Mammary epithelial cell (primary cell): ENCODE measurements at regions of chr19 and their contacts with region 1.

Region 1: DNA sequence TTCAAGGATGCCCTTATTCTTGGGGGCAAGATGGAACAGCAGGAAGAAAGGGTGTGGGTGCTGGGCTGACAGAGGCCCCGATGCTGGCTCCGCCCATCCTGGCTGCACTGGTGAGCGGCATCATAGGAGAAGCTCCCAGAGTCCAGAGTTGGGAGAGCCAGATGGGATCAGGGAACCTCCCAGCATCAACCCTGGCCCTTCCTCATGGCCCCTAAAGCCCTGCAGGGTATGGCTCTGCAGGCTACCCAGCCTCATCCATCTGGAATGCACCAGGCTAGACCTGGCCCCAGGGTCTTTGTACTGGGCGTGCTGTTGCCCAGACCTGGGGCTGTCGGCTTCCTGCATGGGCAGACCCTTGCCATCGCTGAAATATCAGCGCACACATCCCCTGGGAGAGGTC is 7.9 kb upstream of the ELL start:
- DNase-seq: no peak
- H3K4me3 ChIP-seq: no peak overlapping the region
- H3K27ac ChIP-seq: no peak overlapping the region
- H3K4me1 ChIP-seq: peaks cover 14% of the 10 kb centered on the region
- H3K27me3 ChIP-seq: no peaks in the 10 kb centered on the region
- CTCF ChIP-seq: no peak

Region 2: GRCh38 chr19:18469069-18469846 is 60.5 kb before region 1 on chr19:
- CTCF ChIA-PET with region 1: no interaction called
- dilution Hi-C with region 1: loop called (anchors 5 kb)
- in situ Hi-C with region 1: no loop called
- intact Hi-C with region 1: loop called (anchors 5 kb)
- DNase-seq: no peak
- H3K4me3 ChIP-seq: no peak overlapping the region
- H3K27ac ChIP-seq: no peak overlapping the region
- H3K4me1 ChIP-seq: peaks cover 8% of the 10 kb centered on the region
- H3K27me3 ChIP-seq: no peaks in the 10 kb centered on the region
- CTCF ChIP-seq: peak; percentile 68 to 83

Region 3: DNA sequence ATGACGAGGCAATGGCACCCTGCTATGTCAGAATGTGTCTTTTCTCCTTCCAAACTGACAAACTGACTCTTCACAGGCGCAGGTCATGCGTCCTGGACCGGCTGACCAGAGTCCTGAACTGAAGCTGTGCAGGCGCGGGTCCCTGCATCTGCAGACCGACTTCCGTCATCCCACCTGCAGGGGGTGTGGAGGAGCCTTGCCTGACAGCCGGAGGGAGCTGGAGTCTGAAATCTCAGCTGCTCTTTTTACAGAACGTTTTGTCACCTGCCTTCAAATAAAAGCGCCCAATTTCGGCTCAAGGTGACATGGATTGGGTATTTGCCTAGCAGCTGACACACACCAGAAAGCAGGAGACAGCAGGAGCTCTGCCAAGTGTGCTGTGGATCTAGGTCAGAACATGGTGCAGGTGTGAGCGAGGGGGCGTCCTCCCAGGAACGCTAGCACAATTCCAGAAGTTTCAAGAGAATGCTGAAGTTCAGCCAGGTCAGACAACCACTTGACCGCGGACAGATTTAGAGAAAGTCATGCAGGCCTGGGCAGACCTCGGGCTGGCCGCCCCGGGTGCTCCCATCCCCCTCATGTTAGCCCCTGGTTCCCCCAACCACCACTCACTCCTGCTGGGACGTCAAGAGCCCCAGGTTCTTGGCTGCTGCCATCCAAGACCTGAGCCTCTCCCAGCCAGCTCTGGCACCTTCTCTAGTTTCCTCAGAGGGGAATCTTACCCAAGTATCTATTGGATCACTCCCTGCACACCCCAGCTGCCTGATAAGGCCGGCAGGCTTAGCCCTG is 40.8 kb before region 1 on chr19:
- CTCF ChIA-PET with region 1: no interaction called
- dilution Hi-C with region 1: loop called (anchors 5 kb)
- in situ Hi-C with region 1: no loop called
- intact Hi-C with region 1: no loop called
- DNase-seq: no peak
- H3K4me3 ChIP-seq: no peak overlapping the region
- H3K27ac ChIP-seq: no peak overlapping the region
- H3K4me1 ChIP-seq: peaks cover 29% of the 10 kb centered on the region
- H3K27me3 ChIP-seq: no peaks in the 10 kb centered on the region
- CTCF ChIP-seq: peak; percentile 26 to 49

Region 4: DNA sequence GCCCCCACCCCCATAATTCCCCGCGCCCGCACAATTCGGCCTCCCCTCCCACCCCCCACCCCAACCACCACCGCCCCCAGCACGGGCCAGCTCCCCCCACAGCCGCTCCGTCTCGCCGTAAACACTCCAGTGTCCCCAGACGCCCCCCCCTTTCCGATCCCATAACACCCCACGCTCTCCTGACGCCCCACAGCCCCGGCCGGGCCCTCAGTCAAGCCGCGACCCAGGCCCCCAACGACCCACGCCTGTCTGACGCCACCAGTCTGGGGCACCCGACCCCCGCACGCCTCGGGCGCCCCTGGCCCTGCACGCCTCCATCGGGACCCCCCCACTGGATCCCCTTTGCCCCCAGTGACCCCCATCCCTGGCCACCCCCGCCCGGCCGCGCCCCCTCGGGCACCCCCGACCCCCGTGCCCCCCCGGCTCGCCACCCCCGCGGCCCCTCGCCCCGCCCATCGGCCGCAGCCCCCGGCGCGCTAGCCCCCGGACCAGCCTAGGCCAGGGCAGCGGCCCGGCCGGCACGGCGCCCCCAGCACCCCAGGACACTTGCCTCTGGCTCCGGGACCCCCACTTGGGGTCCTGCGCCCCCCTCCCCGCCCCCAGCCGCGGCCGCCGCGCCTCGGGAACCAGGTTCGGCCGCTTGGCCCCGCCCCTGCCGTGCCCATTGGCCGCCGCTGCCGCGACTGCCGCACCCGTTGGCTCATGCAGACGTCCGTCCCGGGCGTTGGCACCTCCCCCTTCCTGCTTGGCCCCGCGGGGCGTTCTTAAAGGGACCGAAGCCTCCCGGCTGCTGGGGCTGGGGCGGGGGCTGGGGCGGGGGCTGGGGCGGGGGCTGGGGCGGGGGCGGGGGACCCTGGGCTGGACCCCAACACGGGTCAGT is 13.4 kb after region 1 on chr19 and contains the start of gene FKBP8:
- CTCF ChIA-PET with region 1: no interaction called
- dilution Hi-C with region 1: no loop called
- in situ Hi-C with region 1: no loop called
- intact Hi-C with region 1: loop called (anchors 2 kb)
- DNase-seq: peak; percentile 73
- H3K4me3 ChIP-seq: peak within 1 kb of the TSS; percentile 71 to 81 (median 81)
- H3K27ac ChIP-seq: peak within 1 kb of the TSS; percentile 45
- H3K4me1 ChIP-seq: no peaks in the 10 kb centered on the region
- H3K27me3 ChIP-seq: no peaks in the 10 kb centered on the region
- CTCF ChIP-seq: no peak
- total RNA-seq, gene FKBP8: 201 to 213 TPM

Region 5: DNA sequence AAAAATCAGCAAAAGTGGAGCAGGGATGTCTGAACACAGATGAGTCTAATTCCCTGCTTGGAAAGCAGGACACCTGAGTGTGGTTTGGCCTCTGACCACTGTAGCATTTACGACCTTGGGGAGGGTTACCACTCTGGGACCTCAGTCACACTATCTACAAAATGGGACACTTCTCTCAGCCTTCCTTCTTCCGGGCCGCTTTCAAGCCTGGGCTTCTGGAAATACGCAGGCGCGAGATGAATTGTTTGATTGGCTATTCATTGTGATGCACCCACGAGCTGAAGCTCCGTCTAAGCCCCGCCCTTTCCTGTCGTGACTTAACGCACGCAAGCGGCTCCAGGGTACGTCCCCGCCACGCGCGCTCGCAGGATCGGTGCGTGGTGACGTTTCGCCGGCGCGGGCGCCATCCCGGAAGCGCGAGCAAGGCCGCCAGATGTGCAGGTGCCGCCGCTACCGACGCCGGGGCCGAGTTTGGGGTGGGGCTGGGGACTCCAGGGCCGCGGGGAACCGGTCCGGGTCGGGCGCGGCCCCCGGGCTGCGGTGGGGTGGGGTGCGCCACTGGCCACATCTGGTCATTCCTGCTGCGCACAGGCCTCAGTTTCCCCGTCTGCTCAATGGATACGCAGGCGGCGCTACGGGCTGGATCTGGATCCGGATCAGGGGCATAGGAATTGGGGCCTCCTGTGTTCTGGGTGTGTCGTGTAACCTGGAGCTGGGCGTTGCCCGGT is 27.9 kb after region 1 on chr19 and contains the start of gene KXD1:
- CTCF ChIA-PET with region 1: interaction called, 3 read pairs
- dilution Hi-C with region 1: no loop called
- in situ Hi-C with region 1: no loop called
- intact Hi-C with region 1: loop called (anchors 1 kb)
- DNase-seq: peak; percentile 94
- H3K4me3 ChIP-seq: peak within 1 kb of the TSS; percentile 69 to 83 (median 81)
- H3K27ac ChIP-seq: peak within 1 kb of the TSS; percentile 73
- H3K4me1 ChIP-seq: no peaks in the 10 kb centered on the region
- H3K27me3 ChIP-seq: no peaks in the 10 kb centered on the region
- CTCF ChIP-seq: no peak
- total RNA-seq, gene KXD1: 83.9 to 98.2 TPM